ENCODE measurements at regions of chr3 and their contacts with region 1.

Region 1: GRCh38 chr3:188954590-188955208 is 217.1 kb upstream of the TPRG1 start:
- DNase-seq: peak; percentile 77 to 88
- H3K4me3 ChIP-seq: no peak overlapping the region
- H3K4me3 Mint-ChIP-seq: no peak overlapping the region
- H3K27ac Mint-ChIP-seq: no peak overlapping the region
- H3K4me1 ChIP-seq: peaks cover 20% of the 10 kb centered on the region
- H3K4me1 Mint-ChIP-seq: peaks cover 12% of the 10 kb centered on the region
- H3K27me3 ChIP-seq: no peaks in the 10 kb centered on the region
- H3K27me3 Mint-ChIP-seq: no peaks in the 10 kb centered on the region
- CTCF ChIP-seq: peak; percentile 91

Region 2: GRCh38 chr3:188052169-188053030 is 902.3 kb before region 1 on chr3:
- CTCF ChIA-PET with region 1: interaction called, 6 read pairs
- POLR2A ChIA-PET with region 1: no interaction called
- intact Hi-C with region 1: loop called (anchors 5 kb)
- DNase-seq: peak; percentile 76
- H3K4me3 ChIP-seq: no peak overlapping the region
- H3K4me3 Mint-ChIP-seq: peak overlapping the region; percentile 48
- H3K27ac Mint-ChIP-seq: peak overlapping the region; percentile 69
- H3K4me1 ChIP-seq: peaks cover 61% of the 10 kb centered on the region
- H3K4me1 Mint-ChIP-seq: peaks cover 25% of the 10 kb centered on the region
- H3K27me3 ChIP-seq: no peaks in the 10 kb centered on the region
- H3K27me3 Mint-ChIP-seq: no peaks in the 10 kb centered on the region
- CTCF ChIP-seq: peak in 1 of 2 experiments; percentile 20

Region 3: DNA sequence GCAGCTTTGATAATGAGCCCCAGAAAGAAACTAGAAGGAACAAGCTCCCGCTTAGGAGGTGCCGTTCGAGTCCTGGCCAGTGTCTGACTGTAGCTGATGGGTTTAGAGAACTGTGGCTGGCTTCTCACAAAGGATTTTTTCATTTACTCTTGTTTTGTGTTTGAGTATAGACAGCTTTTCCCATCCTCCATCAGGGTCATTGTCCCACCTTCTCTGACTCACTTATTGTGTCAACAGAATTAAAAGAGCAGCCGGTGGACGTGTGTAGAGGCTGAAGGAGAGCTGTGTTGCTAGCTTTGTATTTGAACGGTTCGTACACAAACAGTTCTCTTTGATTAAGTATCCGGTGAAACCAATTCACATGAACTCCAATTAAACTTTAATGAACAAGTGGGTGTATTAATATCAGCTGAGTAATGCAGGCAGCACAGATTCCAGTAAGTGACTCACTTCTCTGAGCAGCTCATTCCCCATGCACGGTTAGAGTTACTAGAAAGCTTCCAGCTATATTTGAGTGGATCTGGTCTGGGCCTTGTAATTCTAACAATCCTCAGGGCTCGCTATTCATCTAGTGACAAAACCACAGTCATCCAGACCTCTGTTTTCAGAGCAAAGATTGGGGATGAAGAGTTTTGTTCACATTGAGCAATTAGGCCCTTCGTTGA is 659.7 kb before region 1 on chr3:
- CTCF ChIA-PET with region 1: no interaction called
- POLR2A ChIA-PET with region 1: no interaction called
- intact Hi-C with region 1: loop called (anchors 10 kb)
- DNase-seq: peak; percentile 46 to 53
- H3K4me3 ChIP-seq: no peak overlapping the region
- H3K4me3 Mint-ChIP-seq: peak overlapping the region; percentile 53
- H3K27ac Mint-ChIP-seq: peak overlapping the region; percentile 78
- H3K4me1 ChIP-seq: peaks cover 57% of the 10 kb centered on the region
- H3K4me1 Mint-ChIP-seq: peaks cover 68% of the 10 kb centered on the region
- H3K27me3 ChIP-seq: no peaks in the 10 kb centered on the region
- H3K27me3 Mint-ChIP-seq: no peaks in the 10 kb centered on the region
- CTCF ChIP-seq: no peak

Region 4: GRCh38 chr3:188584162-188584529 is 370.6 kb before region 1 on chr3:
- CTCF ChIA-PET with region 1: interaction called, 3 read pairs
- POLR2A ChIA-PET with region 1: no interaction called
- intact Hi-C with region 1: loop called (anchors 5 kb)
- DNase-seq: peak in 1 of 2 experiments; percentile 9
- H3K4me3 ChIP-seq: no peak overlapping the region
- H3K4me3 Mint-ChIP-seq: no peak overlapping the region
- H3K27ac Mint-ChIP-seq: no peak overlapping the region
- H3K4me1 ChIP-seq: peaks cover 24% of the 10 kb centered on the region
- H3K4me1 Mint-ChIP-seq: peaks cover 7% of the 10 kb centered on the region
- H3K27me3 ChIP-seq: no peaks in the 10 kb centered on the region
- H3K27me3 Mint-ChIP-seq: no peaks in the 10 kb centered on the region
- CTCF ChIP-seq: no peak

Region 5: GRCh38 chr3:188772886-188773285 is 181.8 kb before region 1 on chr3:
- CTCF ChIA-PET with region 1: no interaction called
- POLR2A ChIA-PET with region 1: no interaction called
- intact Hi-C with region 1: no loop called
- DNase-seq: no peak
- H3K4me3 ChIP-seq: no peak overlapping the region
- H3K4me3 Mint-ChIP-seq: no peak overlapping the region
- H3K27ac Mint-ChIP-seq: no peak overlapping the region
- H3K4me1 ChIP-seq: no peaks in the 10 kb centered on the region
- H3K4me1 Mint-ChIP-seq: peaks cover 29% of the 10 kb centered on the region
- H3K27me3 ChIP-seq: no peaks in the 10 kb centered on the region
- H3K27me3 Mint-ChIP-seq: no peaks in the 10 kb centered on the region
- CTCF ChIP-seq: no peak

Region 6: DNA sequence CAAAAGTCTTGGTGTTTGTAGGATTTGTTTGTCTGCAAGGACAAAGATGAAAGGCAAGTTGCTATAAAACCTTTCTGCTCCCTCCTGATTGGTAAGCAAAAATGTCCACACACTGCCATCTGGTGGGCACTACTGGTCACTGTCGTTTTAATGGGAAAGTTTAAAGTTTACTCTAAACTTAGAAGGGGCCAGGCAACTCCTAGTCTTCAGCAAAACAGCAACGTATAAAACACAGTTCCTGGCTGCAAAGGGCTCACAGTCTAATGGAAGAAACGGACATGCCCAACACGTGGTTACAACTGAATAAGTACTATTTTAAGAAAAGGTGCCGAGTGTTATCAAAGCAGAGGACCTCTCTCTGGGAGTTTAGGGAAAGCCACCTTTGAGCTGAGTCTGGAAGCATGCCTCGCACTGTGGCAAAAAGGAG is 193.4 kb after region 1 on chr3:
- CTCF ChIA-PET with region 1: no interaction called
- POLR2A ChIA-PET with region 1: no interaction called
- intact Hi-C with region 1: loop called (anchors 1 kb)
- DNase-seq: peak; percentile 57 to 66
- H3K4me3 ChIP-seq: no peak overlapping the region
- H3K4me3 Mint-ChIP-seq: no peak overlapping the region
- H3K27ac Mint-ChIP-seq: no peak overlapping the region
- H3K4me1 ChIP-seq: no peaks in the 10 kb centered on the region
- H3K4me1 Mint-ChIP-seq: peaks cover 13% of the 10 kb centered on the region
- H3K27me3 ChIP-seq: no peaks in the 10 kb centered on the region
- H3K27me3 Mint-ChIP-seq: no peaks in the 10 kb centered on the region
- CTCF ChIP-seq: peak; percentile 66 to 74